ENCODE measurements at regions of chr3 and their contacts with region 1.

Region 1: GRCh38 chr3:13192471-13193213 is 119.4 kb upstream of the IQSEC1 start:
- DNase-seq: peak in 1 of 2 experiments; percentile 9
- H3K4me3 ChIP-seq: no peak overlapping the region
- H3K4me3 Mint-ChIP-seq: no peak overlapping the region
- H3K27ac Mint-ChIP-seq: no peak overlapping the region
- H3K4me1 ChIP-seq: no peaks in the 10 kb centered on the region
- H3K4me1 Mint-ChIP-seq: no peaks in the 10 kb centered on the region
- H3K27me3 ChIP-seq: peaks cover 2% of the 10 kb centered on the region
- H3K27me3 Mint-ChIP-seq: peaks cover 17% of the 10 kb centered on the region
- CTCF ChIP-seq: peak; percentile 35 to 60

Region 2: GRCh38 chr3:13091898-13092611 is 100.6 kb before region 1 on chr3:
- CTCF ChIA-PET with region 1: interaction called, 8 read pairs
- POLR2A ChIA-PET with region 1: no interaction called
- intact Hi-C with region 1: loop called (anchors 2 kb)
- DNase-seq: peak; percentile 80 to 83
- H3K4me3 ChIP-seq: no peak overlapping the region
- H3K4me3 Mint-ChIP-seq: no peak overlapping the region
- H3K27ac Mint-ChIP-seq: no peak overlapping the region
- H3K4me1 ChIP-seq: no peaks in the 10 kb centered on the region
- H3K4me1 Mint-ChIP-seq: no peaks in the 10 kb centered on the region
- H3K27me3 ChIP-seq: no peaks in the 10 kb centered on the region
- H3K27me3 Mint-ChIP-seq: no peaks in the 10 kb centered on the region
- CTCF ChIP-seq: peak; percentile 86 to 96